Activated CD4-positive, alpha-beta memory T cell treated with anti-CD3 and anti-CD28 coated beads, Interleukin-2, amount 10 ng/mL, durations not matched to agents 7 days and 5 days (primary cell): ENCODE measurements at regions of chr22 and their contacts with region 1.

Region 1: DNA sequence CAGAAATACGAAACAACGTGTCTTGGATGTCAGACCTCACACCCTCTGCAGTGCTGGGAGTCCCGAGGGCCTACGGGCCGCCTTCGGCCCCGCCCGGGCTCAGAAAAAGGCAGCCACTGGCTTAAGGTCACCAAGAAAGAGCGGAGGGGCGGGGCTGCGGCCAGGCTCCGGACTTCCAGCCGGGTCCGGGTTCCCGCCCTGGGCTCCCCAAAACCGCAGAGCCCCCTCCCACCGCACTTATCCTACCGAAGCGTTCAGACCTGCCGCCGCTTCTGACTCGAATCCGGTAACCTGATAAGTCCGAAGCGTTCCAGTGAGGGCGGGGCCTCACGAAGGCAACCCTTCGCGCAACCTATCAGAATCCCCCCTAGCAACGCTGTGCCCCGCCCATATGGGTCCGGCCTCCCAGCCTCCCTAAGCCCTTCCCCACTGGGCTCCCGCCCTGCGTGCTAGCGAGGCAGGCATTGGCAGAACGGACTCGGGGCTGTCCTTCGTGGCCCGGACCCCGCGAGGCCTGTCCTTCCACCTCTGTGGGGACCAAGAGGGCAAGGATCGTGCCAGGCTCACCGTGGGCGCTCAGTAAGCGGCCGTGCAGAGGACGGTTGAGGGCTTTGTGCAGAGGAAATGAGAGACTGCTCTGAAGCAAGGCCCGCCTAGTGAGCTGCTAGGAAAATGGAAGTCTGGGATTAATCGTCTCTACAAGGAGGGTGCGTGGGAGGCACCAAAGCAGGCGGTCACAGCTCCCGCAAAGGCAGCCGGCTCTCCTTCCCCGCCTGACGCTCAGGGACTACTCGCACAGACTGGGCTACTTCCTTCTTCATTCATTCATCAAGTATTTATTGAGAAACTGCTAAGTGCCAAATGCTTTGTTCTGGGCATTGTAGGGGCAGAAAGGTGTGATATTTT is at the start of gene NAGA:
- DNase-seq: peak; percentile 95
- H3K4me3 Mint-ChIP-seq: peak within 1 kb of the TSS; percentile 88
- H3K27ac Mint-ChIP-seq: peak within 1 kb of the TSS; percentile 86
- H3K4me1 Mint-ChIP-seq: peaks cover 55% of the 10 kb centered on the region
- H3K27me3 Mint-ChIP-seq: no peaks in the 10 kb centered on the region
- total RNA-seq, gene NAGA: 33.7 to 35.0 TPM

Region 2: GRCh38 chr22:41998361-41999275 is 72.2 kb before region 1 on chr22 and contains the start of gene WBP2NL:
- CTCF ChIA-PET with region 1: no interaction called
- POLR2A ChIA-PET with region 1: interaction called, 11 read pairs
- DNase-seq: peak; percentile 92
- H3K4me3 Mint-ChIP-seq: peak within 1 kb of the TSS; percentile 98
- H3K27ac Mint-ChIP-seq: peak within 1 kb of the TSS; percentile 88
- H3K4me1 Mint-ChIP-seq: peaks cover 35% of the 10 kb centered on the region
- H3K27me3 Mint-ChIP-seq: peaks cover 2% of the 10 kb centered on the region
- total RNA-seq, gene WBP2NL: 2.0 to 2.3 TPM

Region 3: DNA sequence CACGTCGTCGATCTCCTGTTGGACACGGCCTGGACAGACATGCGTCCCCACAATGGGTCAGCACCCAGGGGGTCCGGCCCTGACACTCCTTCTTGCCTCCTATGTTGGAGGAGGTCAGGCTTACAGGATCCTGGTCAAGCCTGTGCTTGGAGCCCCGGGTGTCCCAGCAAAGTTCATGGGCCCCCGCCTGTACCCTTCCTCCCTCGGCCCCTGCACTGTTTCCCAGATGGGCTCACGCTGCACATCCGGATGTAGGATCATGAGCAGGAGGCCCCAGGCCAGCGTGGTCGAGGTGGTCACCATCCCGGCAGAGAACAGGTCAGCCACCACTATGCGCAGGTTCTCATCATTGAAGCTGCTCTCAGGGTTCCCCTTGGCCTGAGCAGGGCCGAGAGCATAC is 56.8 kb after region 1 on chr22:
- CTCF ChIA-PET with region 1: no interaction called
- POLR2A ChIA-PET with region 1: no interaction called
- DNase-seq: no peak
- H3K4me3 Mint-ChIP-seq: no peak overlapping the region
- H3K27ac Mint-ChIP-seq: no peak overlapping the region
- H3K4me1 Mint-ChIP-seq: no peaks in the 10 kb centered on the region
- H3K27me3 Mint-ChIP-seq: no peaks in the 10 kb centered on the region

Region 4: GRCh38 chr22:42151924-42152635 is 81.3 kb after region 1 on chr22:
- CTCF ChIA-PET with region 1: no interaction called
- POLR2A ChIA-PET with region 1: no interaction called
- DNase-seq: no peak
- H3K4me3 Mint-ChIP-seq: no peak overlapping the region
- H3K27ac Mint-ChIP-seq: no peak overlapping the region
- H3K4me1 Mint-ChIP-seq: no peaks in the 10 kb centered on the region
- H3K27me3 Mint-ChIP-seq: no peaks in the 10 kb centered on the region